ENCODE measurements at regions of chr1 and their contacts with region 1.

Region 1: GRCh38 chr1:112794654-112795239 is 79.6 kb upstream of the PPM1J start:
- DNase-seq: no peak
- ATAC-seq: no peak
- H3K4me3 ChIP-seq: no peak overlapping the region
- H3K27ac ChIP-seq: no peak overlapping the region
- H3K4me1 ChIP-seq: no peaks in the 10 kb centered on the region
- H3K27me3 ChIP-seq: no peaks in the 10 kb centered on the region
- CTCF ChIP-seq: no peak
- POLR2A ChIP-seq: no peak

Region 2: GRCh38 chr1:112735752-112736151 is 59.0 kb before region 1 on chr1:
- in situ Hi-C with region 1: loop called in 1 of 4 experiments (anchors 10 kb)
- intact Hi-C with region 1: no loop called
- DNase-seq: no peak
- ATAC-seq: no peak
- H3K4me3 ChIP-seq: no peak overlapping the region
- H3K27ac ChIP-seq: no peak overlapping the region
- H3K4me1 ChIP-seq: no peaks in the 10 kb centered on the region
- H3K27me3 ChIP-seq: peaks cover 0 to 7% (median 3%) of the 10 kb centered on the region in 3 donors
- CTCF ChIP-seq: no peak
- POLR2A ChIP-seq: no peak

Measured in gastrocnemius medialis (tissue), 4 donors.